ENCODE measurements at regions of chr7 and their contacts with region 1.

Region 1: DNA sequence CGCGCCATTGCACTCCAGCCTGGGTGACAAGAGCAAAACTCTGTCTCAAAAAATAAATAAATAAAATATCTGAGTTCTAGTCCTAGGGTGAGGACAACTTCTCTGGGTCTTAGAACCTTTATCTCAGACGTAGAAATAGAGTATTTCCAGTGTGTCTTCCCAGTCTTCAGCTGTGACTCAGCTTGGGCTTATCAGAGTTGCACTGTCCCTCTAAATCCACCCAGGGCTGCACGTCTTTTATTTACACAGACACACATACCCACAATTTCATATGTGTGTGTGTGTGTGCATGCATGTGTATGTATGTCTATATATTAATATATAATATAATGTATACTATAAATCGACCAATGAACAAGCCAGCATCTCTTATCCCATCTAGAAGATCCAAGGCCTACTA is 13.0 kb upstream of the PDIA4 start:
- DNase-seq: no peak

Region 2: DNA sequence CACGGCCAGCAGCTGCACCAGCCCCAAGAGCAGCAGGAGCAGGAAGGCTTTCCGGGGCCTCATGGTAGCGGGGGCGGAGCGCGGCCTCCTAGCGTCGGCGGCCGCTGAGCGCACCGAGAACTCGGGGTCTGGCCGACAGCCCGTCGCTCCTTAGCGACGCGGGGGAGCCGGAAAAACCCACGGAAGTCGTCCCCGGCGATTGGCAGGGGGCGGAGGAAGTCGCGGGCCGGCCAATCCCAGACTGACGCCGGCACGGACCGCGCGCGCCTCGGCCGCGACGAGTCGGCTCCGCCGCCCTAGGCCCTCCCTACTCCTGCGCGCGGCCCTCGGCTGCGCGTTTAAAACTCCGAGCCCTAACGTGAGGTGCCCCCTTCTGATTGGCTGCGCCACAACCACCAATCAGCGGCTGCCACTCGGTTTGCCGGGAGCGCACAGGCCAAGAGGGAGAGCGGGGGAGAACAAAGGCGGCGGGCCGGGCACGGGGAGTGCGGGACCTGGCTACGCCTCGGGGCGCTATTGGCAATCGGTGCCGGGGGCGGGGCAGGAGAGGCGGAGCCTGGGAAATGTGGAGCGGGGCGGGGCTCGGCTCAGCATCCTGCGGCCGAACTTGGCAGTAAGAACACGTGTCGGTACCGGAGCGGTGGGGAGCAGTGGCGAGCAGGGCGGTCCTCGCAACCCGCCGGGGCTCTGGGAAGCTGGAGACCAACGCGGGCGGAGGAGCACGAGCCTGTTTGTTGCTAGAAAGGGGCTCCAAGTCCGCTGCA is 12.8 kb before region 1 on chr7 and contains the start of gene PDIA4:
- CTCF ChIA-PET with region 1: interaction called, 3 read pairs
- POLR2A ChIA-PET with region 1: interaction called, 15 read pairs
- DNase-seq: peak; percentile 100

Region 3: DNA sequence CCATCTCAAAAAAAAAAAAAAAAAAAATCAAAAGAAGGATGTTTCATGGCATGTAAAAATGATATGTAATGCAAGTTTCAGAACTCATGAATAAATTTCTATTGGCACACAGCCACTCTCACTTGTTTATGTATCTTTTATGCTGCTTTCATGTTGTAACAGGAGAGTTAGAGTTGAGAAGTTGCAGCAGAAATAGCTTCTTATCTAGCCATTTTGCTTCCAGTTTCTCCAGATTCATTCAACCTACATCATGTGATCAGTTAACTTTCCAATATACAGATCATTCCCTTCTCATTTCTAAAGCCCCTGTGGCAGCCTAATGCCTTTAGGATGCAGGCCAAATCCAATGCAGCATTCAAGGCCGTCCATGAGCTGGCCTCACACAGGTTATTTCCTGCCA is 18.8 kb after region 1 on chr7:
- CTCF ChIA-PET with region 1: no interaction called
- POLR2A ChIA-PET with region 1: no interaction called
- DNase-seq: no peak